ENCODE measurements at regions of chr9 and their contacts with region 1.

Region 1: GRCh38 chr9:4762108-4762885 is 21.3 kb upstream of the AK3 start:
- DNase-seq: peak; percentile 72
- H3K4me3 Mint-ChIP-seq: peak overlapping the region; percentile 68
- H3K27ac Mint-ChIP-seq: peak overlapping the region; percentile 65
- H3K4me1 Mint-ChIP-seq: peaks cover 18% of the 10 kb centered on the region
- H3K27me3 Mint-ChIP-seq: no peaks in the 10 kb centered on the region

Region 2: GRCh38 chr9:4923580-4924544 is 161.6 kb after region 1 on chr9:
- intact Hi-C with region 1: loop called (anchors 1 kb)
- DNase-seq: peak; percentile 19
- H3K4me3 Mint-ChIP-seq: no peak overlapping the region
- H3K27ac Mint-ChIP-seq: no peak overlapping the region
- H3K4me1 Mint-ChIP-seq: peaks cover 33% of the 10 kb centered on the region
- H3K27me3 Mint-ChIP-seq: no peaks in the 10 kb centered on the region

Region 3: GRCh38 chr9:5186416-5187169 is 424.3 kb after region 1 on chr9:
- intact Hi-C with region 1: loop called (anchors 1 kb)
- DNase-seq: peak; percentile 46
- H3K4me3 Mint-ChIP-seq: no peak overlapping the region
- H3K27ac Mint-ChIP-seq: no peak overlapping the region
- H3K4me1 Mint-ChIP-seq: peaks cover 24% of the 10 kb centered on the region
- H3K27me3 Mint-ChIP-seq: no peaks in the 10 kb centered on the region

Region 4: DNA sequence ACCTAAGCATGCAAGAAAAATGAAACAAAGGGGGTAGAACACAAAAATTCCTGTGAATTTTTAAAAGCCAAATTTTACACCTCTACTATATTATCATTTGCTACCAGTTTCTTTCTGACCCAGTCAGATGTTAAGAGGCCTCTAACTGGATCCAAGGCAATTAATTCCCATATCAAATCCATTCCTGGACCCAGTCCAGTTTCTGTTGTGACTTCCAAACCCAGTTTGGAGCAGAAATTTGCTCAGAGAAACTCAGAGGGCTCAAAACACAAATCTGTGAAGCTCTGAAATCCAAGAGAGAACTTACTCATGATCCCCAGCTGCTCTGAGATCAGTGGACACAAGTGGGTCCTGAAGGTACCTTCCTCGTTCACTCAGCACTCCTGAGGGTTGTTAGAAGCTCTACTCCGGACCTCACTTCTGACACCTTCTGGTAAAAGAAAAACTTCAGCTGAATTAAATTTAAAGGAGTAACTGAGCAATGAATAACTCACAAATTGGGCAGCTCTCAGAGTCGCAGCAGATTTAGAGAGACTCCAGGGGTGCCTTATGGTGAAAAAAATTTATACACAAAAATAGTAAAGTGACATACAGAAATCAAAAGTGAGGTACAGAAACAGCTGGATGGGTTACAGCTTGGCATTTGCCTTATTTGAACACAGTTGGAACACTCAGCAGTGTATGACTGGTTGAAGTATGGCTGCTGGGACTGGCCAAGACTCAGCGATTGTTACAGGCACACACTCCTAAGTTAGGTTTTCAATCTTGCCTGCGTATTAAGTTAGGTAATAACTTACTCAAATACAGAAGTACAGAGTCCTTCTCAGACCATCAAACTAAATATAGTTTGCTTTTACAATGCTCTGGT is 501.3 kb after region 1 on chr9:
- intact Hi-C with region 1: loop called (anchors 2 kb)
- DNase-seq: no peak
- H3K4me3 Mint-ChIP-seq: no peak overlapping the region
- H3K27ac Mint-ChIP-seq: no peak overlapping the region
- H3K4me1 Mint-ChIP-seq: no peaks in the 10 kb centered on the region
- H3K27me3 Mint-ChIP-seq: no peaks in the 10 kb centered on the region

Region 5: GRCh38 chr9:5596173-5596572 is 833.9 kb after region 1 on chr9:
- intact Hi-C with region 1: loop called (anchors 1 kb)
- DNase-seq: no peak
- H3K4me3 Mint-ChIP-seq: no peak overlapping the region
- H3K27ac Mint-ChIP-seq: no peak overlapping the region
- H3K4me1 Mint-ChIP-seq: peaks cover 29% of the 10 kb centered on the region
- H3K27me3 Mint-ChIP-seq: no peaks in the 10 kb centered on the region